ENCODE measurements at regions of chr4 and their contacts with region 1.

Region 1: GRCh38 chr4:133148690-133149363 is at the start of gene PCDH10:
- DNase-seq: peak; percentile 77 to 97
- H3K4me3 ChIP-seq: peak within 1 kb of the TSS; percentile 58 to 79
- H3K27ac ChIP-seq: peak within 1 kb of the TSS; percentile 86 to 93
- H3K4me1 ChIP-seq: no peaks in the 10 kb centered on the region
- H3K27me3 ChIP-seq: no peaks in the 10 kb centered on the region
- CTCF ChIP-seq: no peak
- total RNA-seq, gene PCDH10: 45.3 TPM

Region 2: DNA sequence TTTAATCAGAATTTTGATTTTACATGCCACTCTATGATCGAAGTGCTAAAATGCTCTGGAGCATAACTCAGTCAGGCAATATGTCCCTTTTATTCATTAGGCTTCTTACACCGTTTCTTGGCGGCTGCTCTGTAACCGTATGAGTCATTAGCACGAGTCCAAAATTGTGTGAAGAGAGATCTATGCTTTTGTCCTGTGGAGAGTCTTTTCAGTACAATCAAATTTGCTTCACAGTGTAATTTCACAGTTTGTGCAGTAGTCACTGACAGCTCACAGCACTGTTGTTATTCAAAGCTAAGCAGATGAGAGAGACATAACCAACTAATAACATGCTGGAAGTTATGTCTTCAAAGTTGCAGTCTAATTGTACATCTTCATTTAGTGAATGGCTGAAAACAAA is 168.1 kb after region 1 on chr4:
- intact Hi-C with region 1: loop called (anchors 5 kb)
- DNase-seq: no peak
- H3K4me3 ChIP-seq: no peak overlapping the region
- H3K27ac ChIP-seq: no peak overlapping the region
- H3K4me1 ChIP-seq: no peaks in the 10 kb centered on the region
- H3K27me3 ChIP-seq: no peaks in the 10 kb centered on the region
- CTCF ChIP-seq: no peak

Region 3: GRCh38 chr4:133483600-133484246 is 334.9 kb after region 1 on chr4:
- intact Hi-C with region 1: loop called (anchors 2 kb)
- DNase-seq: no peak
- H3K4me3 ChIP-seq: no peak overlapping the region
- H3K27ac ChIP-seq: no peak overlapping the region
- H3K4me1 ChIP-seq: no peaks in the 10 kb centered on the region
- H3K27me3 ChIP-seq: no peaks in the 10 kb centered on the region
- CTCF ChIP-seq: peak; percentile 8 to 57 (median 43)

Region 4: DNA sequence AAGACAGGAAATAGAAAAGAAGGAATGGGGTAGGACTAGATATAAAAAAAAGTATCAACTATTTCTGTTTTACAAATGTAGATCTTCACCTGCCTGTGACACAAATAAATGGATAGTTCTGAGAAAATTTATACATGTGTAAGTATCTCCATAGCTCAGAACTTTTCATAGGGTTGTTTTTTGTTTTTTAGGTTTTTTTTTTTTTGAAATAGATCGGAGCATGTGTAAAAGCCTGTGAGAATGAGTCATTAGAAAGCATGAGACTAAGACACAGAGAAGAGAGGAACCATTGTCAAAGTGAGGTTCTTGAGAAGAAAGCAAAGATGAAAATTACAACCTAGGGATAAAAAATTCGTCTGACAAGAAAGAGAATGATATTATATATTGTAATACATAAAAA is 571.2 kb after region 1 on chr4:
- intact Hi-C with region 1: loop called (anchors 5 kb)
- DNase-seq: no peak
- H3K4me3 ChIP-seq: no peak overlapping the region
- H3K27ac ChIP-seq: no peak overlapping the region
- H3K4me1 ChIP-seq: no peaks in the 10 kb centered on the region
- H3K27me3 ChIP-seq: no peaks in the 10 kb centered on the region
- CTCF ChIP-seq: no peak

Region 5: DNA sequence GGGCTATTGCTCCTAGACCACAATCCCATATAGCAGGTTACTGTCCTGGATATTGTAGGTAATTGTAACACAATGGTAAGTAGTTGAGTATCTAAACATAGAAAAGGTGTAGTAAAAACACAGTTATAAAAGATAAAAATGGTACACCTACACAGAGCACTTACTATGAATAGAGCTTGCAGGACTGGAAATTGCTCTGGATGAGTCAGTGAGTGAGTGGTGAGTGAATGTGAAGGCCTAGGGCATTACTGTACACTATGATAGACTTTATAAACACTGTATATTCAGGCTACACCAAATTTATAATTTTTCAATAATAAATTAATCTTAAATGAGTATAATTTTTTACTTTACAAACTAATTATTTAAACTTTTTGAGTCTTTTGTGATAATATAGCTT is 627.1 kb after region 1 on chr4:
- intact Hi-C with region 1: loop called (anchors 10 kb)
- DNase-seq: no peak
- H3K4me3 ChIP-seq: no peak overlapping the region
- H3K27ac ChIP-seq: no peak overlapping the region
- H3K4me1 ChIP-seq: no peaks in the 10 kb centered on the region
- H3K27me3 ChIP-seq: no peaks in the 10 kb centered on the region
- CTCF ChIP-seq: no peak

Region 6: DNA sequence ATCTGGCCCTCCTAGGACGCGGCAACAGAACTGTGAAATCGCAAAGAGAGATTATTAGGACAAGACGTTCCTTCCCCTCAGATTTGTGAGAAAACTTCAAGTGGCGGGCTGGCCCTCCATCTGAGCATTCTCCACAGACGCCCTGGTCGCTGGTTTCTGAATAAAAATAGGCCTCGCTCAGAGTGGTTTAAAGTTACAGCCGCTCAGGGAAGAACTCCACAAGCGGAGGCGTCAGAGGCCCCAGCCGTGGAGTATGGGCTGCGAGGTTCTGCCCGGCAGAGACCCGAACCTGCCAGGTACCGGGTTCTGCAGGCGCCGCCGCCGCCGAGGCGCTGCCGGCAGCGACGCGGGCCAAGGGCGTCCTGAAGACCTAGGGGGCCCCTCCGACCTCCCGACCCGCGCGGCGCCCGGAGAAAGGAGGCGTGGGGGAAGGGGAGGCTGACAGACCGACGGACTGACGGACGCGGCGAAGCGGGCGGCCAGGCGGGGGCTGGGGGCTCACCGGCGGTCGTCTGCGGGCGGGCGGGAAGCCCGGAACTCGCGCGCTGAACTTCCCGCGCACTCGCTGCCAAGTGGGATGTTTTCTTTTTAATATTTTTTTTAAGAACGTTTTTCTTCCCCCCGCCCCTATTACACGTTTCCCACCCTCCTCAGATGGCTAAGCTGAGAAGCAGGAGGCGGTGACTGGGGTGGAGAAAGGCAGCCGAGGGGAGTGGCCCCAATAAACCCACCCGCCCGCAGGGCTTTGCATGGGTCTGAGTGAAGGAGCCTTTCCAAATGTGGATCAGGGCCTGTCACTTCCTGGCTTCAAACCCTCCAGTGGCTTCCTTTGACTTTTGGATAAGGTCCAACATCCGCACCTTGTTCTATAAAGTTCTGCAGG is 1052.6 kb after region 1 on chr4 and contains the start of gene PABPC4L:
- intact Hi-C with region 1: loop called (anchors 10 kb)
- DNase-seq: peak in 1 of 2 donors; percentile 77
- H3K4me3 ChIP-seq: peak within 1 kb of the TSS; percentile 69 to 86
- H3K27ac ChIP-seq: peak within 1 kb of the TSS; percentile 75 to 86
- H3K4me1 ChIP-seq: no peaks in the 10 kb centered on the region
- H3K27me3 ChIP-seq: no peaks in the 10 kb centered on the region
- CTCF ChIP-seq: no peak
- total RNA-seq, gene PABPC4L: 1.3 TPM